Prostate gland (tissue), 2 donors: ENCODE measurements at regions of chr14 and their contacts with region 1.

Region 1: DNA sequence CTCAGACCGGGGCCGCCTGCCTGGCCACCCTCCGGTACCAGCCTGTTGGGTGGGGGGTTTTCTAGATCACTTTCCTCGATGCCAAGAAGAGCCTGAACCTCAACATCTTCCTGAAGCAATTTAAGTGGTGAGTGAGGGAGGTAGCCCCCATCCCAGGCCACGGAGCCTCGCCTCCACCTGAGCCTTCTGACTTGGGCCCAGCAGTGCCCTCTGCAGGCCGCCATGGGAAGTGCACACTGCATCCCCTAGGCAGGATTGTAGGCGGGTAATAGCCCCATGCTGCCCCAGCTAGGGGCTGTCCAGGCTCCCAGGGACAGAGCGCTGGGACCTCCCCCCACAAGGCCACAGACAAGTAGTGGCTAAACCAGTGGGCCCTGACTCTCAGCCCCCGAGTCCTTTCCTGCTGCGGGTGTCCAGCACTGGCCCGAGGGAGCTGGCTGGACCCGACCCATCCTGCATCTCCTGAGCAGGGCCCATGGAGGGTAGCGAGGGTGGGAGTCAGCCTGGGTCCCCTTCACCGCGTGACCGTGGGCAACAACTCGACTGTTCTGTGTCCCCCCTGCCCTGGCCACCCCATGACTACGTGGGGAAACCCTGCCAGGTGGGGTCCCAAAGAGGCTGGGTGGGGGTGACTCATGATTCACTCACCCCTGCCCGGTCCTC is 15.3 kb upstream of the ADSS1 start:
- DNase-seq: peak; percentile 42
- H3K4me3 ChIP-seq: no peak overlapping the region
- H3K27ac ChIP-seq: no peak overlapping the region
- H3K4me1 ChIP-seq: no peaks in the 10 kb centered on the region
- H3K27me3 ChIP-seq: no peaks in the 10 kb centered on the region
- CTCF ChIP-seq: peak; percentile 88 to 97 (median 94)
- POLR2A ChIP-seq: no peak

Region 2: GRCh38 chr14:104650057-104650981 is 58.4 kb before region 1 on chr14:
- intact Hi-C with region 1: loop called (anchors 1 kb)
- DNase-seq: peak; percentile 36
- H3K4me3 ChIP-seq: peak overlapping the region in 1 of 2 donors; percentile 28
- H3K27ac ChIP-seq: no peak overlapping the region
- H3K4me1 ChIP-seq: no peaks in the 10 kb centered on the region
- H3K27me3 ChIP-seq: no peaks in the 10 kb centered on the region
- CTCF ChIP-seq: peak; percentile 90 to 98 (median 92)
- POLR2A ChIP-seq: no peak

Region 3: GRCh38 chr14:104773505-104774453 is 65.0 kb after region 1 on chr14:
- intact Hi-C with region 1: no loop called
- DNase-seq: no peak
- H3K4me3 ChIP-seq: no peak overlapping the region
- H3K27ac ChIP-seq: peak overlapping the region; percentile 58 to 73
- H3K4me1 ChIP-seq: peaks cover 20% of the 10 kb centered on the region
- H3K27me3 ChIP-seq: no peaks in the 10 kb centered on the region
- CTCF ChIP-seq: no peak
- POLR2A ChIP-seq: no peak

Region 4: GRCh38 chr14:104932676-104933631 is 224.2 kb after region 1 on chr14:
- intact Hi-C with region 1: no loop called
- DNase-seq: peak; percentile 74
- H3K4me3 ChIP-seq: peak overlapping the region; percentile 54 to 55
- H3K27ac ChIP-seq: peak overlapping the region; percentile 31 to 51
- H3K4me1 ChIP-seq: no peaks in the 10 kb centered on the region
- H3K27me3 ChIP-seq: no peaks in the 10 kb centered on the region
- CTCF ChIP-seq: peak; percentile 70 to 84 (median 77)
- POLR2A ChIP-seq: no peak